HEK293 (cell line): ENCODE measurements at regions of chrX and their contacts with region 1.

Region 1: DNA sequence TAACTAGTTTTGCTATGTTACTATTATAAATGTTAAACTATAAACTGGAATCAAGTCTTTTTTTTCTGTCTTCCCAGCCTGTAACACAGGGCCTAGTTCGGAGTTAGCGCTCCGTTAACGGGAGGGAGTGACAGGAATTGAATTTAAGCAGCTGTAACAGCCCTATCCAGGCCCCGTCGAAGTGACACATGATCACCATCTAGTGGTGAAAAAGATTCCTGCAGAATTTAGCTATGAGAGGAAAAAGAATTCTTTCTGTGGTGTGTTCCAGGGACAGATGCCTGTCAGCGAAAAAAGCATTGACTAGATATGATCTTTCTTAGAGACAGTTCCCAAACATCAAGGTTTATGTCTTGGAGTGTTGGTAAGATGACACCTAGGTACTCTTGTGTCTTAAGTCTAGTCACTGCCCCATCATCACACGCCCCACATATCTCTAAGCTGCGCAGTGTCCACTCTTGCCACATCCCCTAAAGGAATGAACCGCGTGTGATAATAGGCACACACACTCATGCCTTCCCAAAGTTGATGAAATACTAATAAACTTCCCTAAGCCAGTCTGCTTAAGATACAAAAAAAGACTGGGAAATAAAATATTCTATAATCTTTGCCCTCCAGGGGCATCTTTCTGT is 2.0 kb downstream of the GAB3 start:
- H3K4me3 ChIP-seq: no peak overlapping the region
- H3K27ac ChIP-seq: no peak overlapping the region
- H3K4me1 ChIP-seq: no peaks in the 10 kb centered on the region
- CTCF ChIP-seq: peak; percentile 42; the same call in 1 of the 2 replicates

Region 2: GRCh38 chrX:154712781-154713740 is 35.8 kb before region 1 on chrX:
- CTCF ChIA-PET with region 1: interaction called, 50 read pairs
- POLR2A ChIA-PET with region 1: interaction called, 4 read pairs
- H3K4me3 ChIP-seq: no peak overlapping the region
- H3K27ac ChIP-seq: no peak overlapping the region
- H3K4me1 ChIP-seq: peaks cover 5% of the 10 kb centered on the region; the same call in 1 of the 2 replicates
- CTCF ChIP-seq: no peak

Region 3: GRCh38 chrX:154727871-154728270 is 21.0 kb before region 1 on chrX:
- CTCF ChIA-PET with region 1: interaction called, 46 read pairs
- POLR2A ChIA-PET with region 1: no interaction called
- H3K4me3 ChIP-seq: no peak overlapping the region
- H3K27ac ChIP-seq: no peak overlapping the region
- H3K4me1 ChIP-seq: peaks cover 4% of the 10 kb centered on the region; the same call in 1 of the 2 replicates
- CTCF ChIP-seq: no peak

Region 4: GRCh38 chrX:154762523-154763289 is 13.9 kb after region 1 on chrX and contains the start of gene DKC1:
- CTCF ChIA-PET with region 1: interaction called, 10 read pairs
- POLR2A ChIA-PET with region 1: interaction called, 22 read pairs
- H3K4me3 ChIP-seq: peak within 1 kb of the TSS; percentile 73
- H3K27ac ChIP-seq: peak within 1 kb of the TSS; percentile 89
- H3K4me1 ChIP-seq: no peaks in the 10 kb centered on the region
- CTCF ChIP-seq: peak; percentile 77

Region 5: DNA sequence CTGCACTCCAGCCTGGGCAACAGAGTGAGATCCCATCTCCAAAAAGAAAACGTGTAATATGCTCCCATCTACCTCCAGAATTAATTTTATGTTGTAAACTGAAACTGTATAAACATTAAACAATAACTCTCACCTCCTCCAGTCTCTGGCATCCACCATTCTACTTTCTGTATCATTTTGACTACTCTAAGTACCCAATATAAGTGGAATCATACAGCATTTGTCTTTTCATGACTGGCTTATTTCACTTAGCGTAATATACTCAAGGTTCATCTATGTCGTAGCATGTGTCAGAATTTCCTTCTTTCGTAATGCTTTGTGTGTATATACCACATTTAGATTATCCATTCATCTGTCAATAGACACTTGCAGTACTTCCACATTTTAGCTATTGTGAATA is 253.0 kb after region 1 on chrX:
- CTCF ChIA-PET with region 1: no interaction called
- POLR2A ChIA-PET with region 1: no interaction called
- H3K4me3 ChIP-seq: no peak overlapping the region
- H3K27ac ChIP-seq: no peak overlapping the region
- H3K4me1 ChIP-seq: no peaks in the 10 kb centered on the region
- CTCF ChIP-seq: no peak